ENCODE measurements at regions of chr2 and their contacts with region 1.

Region 1: GRCh38 chr2:68878753-68879152 is 7.6 kb upstream of the BMP10 start:
- DNase-seq: no peak
- H3K4me3 ChIP-seq: no peak overlapping the region
- H3K27ac ChIP-seq: no peak overlapping the region
- H3K4me1 ChIP-seq: 0 out of 4 replicates have a peak, but pooled peaks cover 0 to 7% of the 10 kb centered on the region in 2 experiments
- H3K27me3 ChIP-seq: no peaks in the 10 kb centered on the region
- CTCF ChIP-seq: no peak
- EP300 ChIP-seq: no peak
- RAD21 ChIP-seq: no peak

Region 2: GRCh38 chr2:68909793-68910674 is 31.3 kb after region 1 on chr2:
- CTCF ChIA-PET with region 1: interaction called, 16 read pairs
- POLR2A ChIA-PET with region 1: no interaction called
- DNase-seq: peak; percentile 70
- H3K4me3 ChIP-seq: peak overlapping the region in 1 of 2 experiments; percentile 6; a peak in 1 of 4 replicates
- H3K27ac ChIP-seq: no peak overlapping the region
- H3K4me1 ChIP-seq: peaks cover 0 to 8% of the 10 kb centered on the region in 2 experiments; a peak in 2 of 4 replicates
- H3K27me3 ChIP-seq: no peaks in the 10 kb centered on the region
- CTCF ChIP-seq: peak; percentile 92
- EP300 ChIP-seq: no peak
- RAD21 ChIP-seq: peak; percentile 96

Region 3: GRCh38 chr2:69817729-69818501 is 939.2 kb after region 1 on chr2:
- CTCF ChIA-PET with region 1: no interaction called
- POLR2A ChIA-PET with region 1: no interaction called
- DNase-seq: peak; percentile 16
- H3K4me3 ChIP-seq: no peak overlapping the region
- H3K27ac ChIP-seq: no peak overlapping the region
- H3K4me1 ChIP-seq: peaks cover 0 to 3% of the 10 kb centered on the region in 2 experiments; a peak in 2 of 4 replicates
- H3K27me3 ChIP-seq: no peaks in the 10 kb centered on the region
- CTCF ChIP-seq: no peak
- EP300 ChIP-seq: no peak
- RAD21 ChIP-seq: no peak